ENCODE measurements at regions of chr5 and their contacts with region 1.

Region 1: GRCh38 chr5:152142840-152143469 is 218.3 kb upstream of the GLRA1 start:
- DNase-seq: peak; percentile 65
- H3K4me3 Mint-ChIP-seq: no peak overlapping the region
- H3K27ac Mint-ChIP-seq: no peak overlapping the region
- H3K4me1 Mint-ChIP-seq: no peaks in the 10 kb centered on the region
- H3K27me3 Mint-ChIP-seq: peaks cover 2% of the 10 kb centered on the region

Region 2: GRCh38 chr5:151819830-151820229 is 323.1 kb before region 1 on chr5:
- CTCF ChIA-PET with region 1: interaction called, 125 read pairs
- POLR2A ChIA-PET with region 1: no interaction called
- DNase-seq: no peak
- H3K4me3 Mint-ChIP-seq: no peak overlapping the region
- H3K27ac Mint-ChIP-seq: no peak overlapping the region
- H3K4me1 Mint-ChIP-seq: no peaks in the 10 kb centered on the region
- H3K27me3 Mint-ChIP-seq: no peaks in the 10 kb centered on the region